ENCODE measurements at regions of chr2 and their contacts with region 1.

Region 1: GRCh38 chr2:45494269-45494977 is 116.6 kb downstream of the SRBD1 start:
- DNase-seq: peak; percentile 33
- H3K4me3 ChIP-seq: no peak overlapping the region
- H3K27ac ChIP-seq: no peak overlapping the region
- H3K4me1 ChIP-seq: no peaks in the 10 kb centered on the region
- H3K27me3 ChIP-seq: no peaks in the 10 kb centered on the region
- CTCF ChIP-seq: peak; percentile 76 to 78

Region 2: DNA sequence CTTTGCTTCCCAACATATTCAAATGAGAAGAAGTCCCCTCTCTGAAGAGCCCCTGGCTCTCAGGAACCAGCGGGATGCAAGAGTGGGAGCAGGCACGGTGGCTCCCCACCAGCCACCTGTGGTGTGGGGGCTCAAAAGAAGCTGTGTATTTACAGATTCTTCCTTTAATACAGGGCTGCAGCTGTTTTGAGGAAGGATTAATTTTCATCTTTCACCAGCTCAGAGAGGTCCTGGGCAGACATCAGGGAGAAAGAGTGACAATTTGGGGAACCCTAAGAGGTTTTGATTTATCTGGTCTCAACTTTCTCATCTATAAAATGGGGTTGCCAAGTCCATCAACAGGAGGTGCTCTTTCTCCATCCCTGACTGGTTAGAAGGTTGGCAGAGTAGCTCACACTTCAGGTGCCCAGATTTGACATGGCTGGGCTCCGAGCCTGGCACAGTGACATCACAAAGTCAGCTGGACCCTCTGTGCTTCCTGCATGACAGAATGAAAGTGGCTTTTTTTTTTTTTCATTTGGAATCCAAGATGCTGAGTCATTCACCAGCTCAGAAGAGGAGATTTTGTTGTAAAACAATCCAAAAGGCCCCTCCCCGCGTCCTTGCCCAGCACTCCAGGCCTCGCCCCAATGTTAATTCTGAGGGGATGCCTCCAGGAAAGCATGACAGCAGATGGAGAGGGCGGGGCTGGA is 469.7 kb before region 1 on chr2:
- CTCF ChIA-PET with region 1: interaction called, 6 read pairs
- dilution Hi-C with region 1: no loop called
- in situ Hi-C with region 1: no loop called
- intact Hi-C with region 1: loop called (anchors 1 kb)
- DNase-seq: peak; percentile 87
- H3K4me3 ChIP-seq: no peak overlapping the region
- H3K27ac ChIP-seq: no peak overlapping the region
- H3K4me1 ChIP-seq: peaks cover 2% of the 10 kb centered on the region
- H3K27me3 ChIP-seq: no peaks in the 10 kb centered on the region
- CTCF ChIP-seq: peak; percentile 13 to 35

Region 3: DNA sequence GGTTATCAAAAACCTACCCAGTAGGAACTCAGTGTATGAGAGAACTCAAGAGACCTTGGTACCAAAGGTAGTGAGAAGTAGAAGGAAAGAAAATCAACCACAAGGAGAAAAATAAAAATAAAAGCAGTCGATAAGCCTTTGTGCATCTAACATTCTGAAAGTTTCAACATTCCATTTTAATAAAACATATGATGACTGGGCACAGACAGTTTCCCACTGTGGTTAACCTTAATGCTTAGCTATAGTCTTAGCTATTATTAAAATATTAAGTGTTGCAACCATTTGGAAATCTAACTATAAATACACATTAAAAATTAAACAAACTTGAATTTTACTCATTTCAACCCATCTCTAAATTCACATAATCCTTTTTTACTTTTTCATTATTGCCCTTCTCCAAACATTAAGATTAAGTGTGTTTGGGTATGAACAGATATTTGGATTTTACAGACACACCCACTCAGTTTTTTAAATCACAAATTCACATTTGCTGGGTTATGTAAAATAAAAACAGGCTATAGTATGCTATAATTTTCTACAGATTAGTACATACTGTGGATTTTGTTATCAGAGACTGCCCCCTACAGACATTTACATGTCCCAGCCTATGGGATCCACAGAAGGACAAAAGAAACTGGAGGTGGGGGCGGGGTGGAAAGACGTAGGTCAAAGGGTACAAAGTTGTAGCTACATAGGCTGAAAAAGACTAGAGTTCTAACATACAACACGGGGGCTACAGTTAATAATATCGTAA is 83.8 kb after region 1 on chr2:
- CTCF ChIA-PET with region 1: no interaction called
- dilution Hi-C with region 1: no loop called
- in situ Hi-C with region 1: no loop called
- intact Hi-C with region 1: loop called (anchors 1 kb)
- DNase-seq: no peak
- H3K4me3 ChIP-seq: no peak overlapping the region
- H3K27ac ChIP-seq: no peak overlapping the region
- H3K4me1 ChIP-seq: no peaks in the 10 kb centered on the region
- H3K27me3 ChIP-seq: no peaks in the 10 kb centered on the region
- CTCF ChIP-seq: peak; percentile 27 to 42

Region 4: DNA sequence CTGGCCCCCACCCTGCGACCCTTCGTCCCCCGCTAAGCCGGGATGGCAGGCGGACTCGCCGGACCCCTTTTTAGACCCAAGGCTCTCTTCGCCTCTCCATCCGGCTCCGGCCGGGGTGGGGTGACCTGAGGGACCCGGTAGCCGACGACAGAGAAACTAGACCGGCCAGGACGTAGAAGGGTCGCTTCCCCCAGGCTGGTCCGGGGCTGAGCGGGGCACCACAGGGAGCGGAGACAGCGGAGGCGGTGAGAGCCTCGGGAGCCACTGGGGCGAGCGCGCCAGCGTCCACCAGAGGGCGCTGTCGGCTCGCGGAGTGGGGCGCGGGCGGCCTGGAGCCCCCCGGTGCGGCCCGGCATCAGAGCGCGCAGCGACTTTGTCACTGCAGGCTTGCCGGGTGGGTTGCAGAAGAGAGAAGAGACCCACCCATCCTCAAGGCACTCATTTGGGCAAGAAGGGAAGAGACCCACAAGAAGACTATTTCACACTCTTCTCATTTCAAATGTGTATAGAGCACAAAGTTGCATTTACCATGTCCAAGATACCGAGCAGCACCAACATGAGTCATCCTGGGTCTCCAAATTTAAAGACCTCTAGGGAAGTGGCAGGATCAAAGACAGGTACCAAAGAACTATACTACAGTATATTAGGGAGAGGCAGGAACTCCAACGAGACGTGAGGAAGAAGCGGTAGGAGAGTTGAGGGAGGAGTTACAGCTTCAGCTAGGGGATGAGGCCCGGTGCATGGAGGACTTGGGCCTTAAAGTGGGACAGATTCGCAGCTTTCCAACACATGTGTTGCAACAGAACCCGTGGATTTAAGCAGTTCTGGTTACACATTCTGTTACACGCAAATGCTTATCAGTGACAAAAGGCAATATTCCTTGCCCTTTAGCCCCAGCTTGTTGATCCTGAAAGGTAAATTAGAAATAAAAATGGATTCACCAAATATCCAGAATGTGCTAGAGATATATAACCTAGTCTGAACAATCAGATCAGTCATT is 149.4 kb after region 1 on chr2:
- CTCF ChIA-PET with region 1: no interaction called
- dilution Hi-C with region 1: no loop called
- in situ Hi-C with region 1: no loop called
- intact Hi-C with region 1: no loop called
- DNase-seq: peak; percentile 49
- H3K4me3 ChIP-seq: peak overlapping the region; percentile 48 to 65 (median 51)
- H3K27ac ChIP-seq: no peak overlapping the region
- H3K4me1 ChIP-seq: peaks cover 12% of the 10 kb centered on the region
- H3K27me3 ChIP-seq: peaks cover 2% of the 10 kb centered on the region
- CTCF ChIP-seq: peak; percentile 61 to 83

Measured in mammary epithelial cell (primary cell).